ENCODE measurements at regions of chr16 and their contacts with region 1.

Region 1: DNA sequence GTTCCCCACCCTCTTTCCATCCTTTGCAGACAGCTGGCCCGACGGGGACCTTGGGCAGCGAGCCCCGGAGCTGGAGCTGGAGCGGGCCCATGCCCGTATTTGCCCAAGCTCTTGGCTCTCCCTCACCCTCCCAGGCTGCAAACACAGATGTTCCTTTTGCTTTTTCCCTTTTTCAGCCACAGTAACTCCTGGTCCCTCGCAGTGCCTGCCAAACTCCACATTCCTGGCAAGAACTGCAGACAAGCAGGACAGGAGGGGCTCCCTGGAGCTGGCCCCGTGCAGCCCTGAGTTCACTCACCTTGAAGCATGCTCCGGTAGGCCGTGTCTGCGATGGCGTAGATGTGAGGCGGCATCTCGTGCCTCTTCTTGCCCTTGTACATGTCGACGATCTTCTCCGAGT is 33.9 kb downstream of the MYH11 start:
- DNase-seq: no peak
- H3K4me3 Mint-ChIP-seq: no peak overlapping the region
- H3K27ac Mint-ChIP-seq: no peak overlapping the region
- H3K4me1 Mint-ChIP-seq: no peaks in the 10 kb centered on the region
- H3K27me3 Mint-ChIP-seq: peaks cover 4% of the 10 kb centered on the region

Region 2: DNA sequence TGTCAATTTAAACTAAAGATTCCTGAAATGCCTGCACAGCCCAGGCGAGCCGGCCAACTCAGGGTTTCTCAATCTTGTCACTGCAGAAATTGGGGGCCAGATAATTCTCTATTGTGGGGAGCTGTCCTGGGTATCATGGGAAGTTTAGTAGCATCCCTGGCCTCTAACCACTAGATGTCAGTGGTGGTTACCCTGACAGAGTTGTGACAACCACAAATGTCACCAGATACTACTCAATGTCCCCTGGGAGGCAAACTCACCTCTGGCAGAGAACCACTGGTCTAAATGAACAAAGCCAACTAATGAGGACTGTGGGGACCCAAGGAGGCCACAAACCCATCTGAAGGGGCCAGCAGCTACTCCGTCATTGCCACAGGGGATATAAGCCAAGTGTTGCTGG is 57.1 kb before region 1 on chr16:
- CTCF ChIA-PET with region 1: interaction called, 11 read pairs
- DNase-seq: peak; percentile 54
- H3K4me3 Mint-ChIP-seq: no peak overlapping the region
- H3K27ac Mint-ChIP-seq: no peak overlapping the region
- H3K4me1 Mint-ChIP-seq: no peaks in the 10 kb centered on the region
- H3K27me3 Mint-ChIP-seq: no peaks in the 10 kb centered on the region

Region 3: DNA sequence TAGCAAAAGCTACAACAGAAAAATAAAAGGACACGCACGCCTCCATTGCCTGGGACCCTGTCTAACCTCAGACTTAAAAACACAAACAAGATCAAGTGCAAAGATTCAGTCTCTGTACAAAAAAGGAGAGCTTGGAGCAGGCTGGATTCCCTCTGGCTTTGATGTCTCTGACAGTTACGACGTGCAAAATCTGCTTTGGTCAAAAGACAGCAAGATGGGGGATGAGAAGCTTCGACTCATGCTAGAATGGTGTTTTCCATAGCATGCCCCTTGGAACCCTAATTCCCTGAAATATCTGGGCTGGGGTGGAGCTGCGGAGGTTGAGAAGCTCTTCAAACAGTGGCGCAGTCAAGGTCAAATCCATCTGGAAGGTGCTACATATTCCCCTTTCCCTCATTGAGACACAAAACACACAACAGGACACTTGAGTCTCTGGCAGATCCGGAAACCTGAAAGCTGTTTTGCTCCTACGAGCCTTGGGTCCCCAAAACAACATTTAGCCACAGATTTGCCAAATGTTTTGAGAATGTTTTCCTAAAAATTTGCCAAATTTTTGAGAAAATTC is 24.7 kb after region 1 on chr16:
- CTCF ChIA-PET with region 1: interaction called, 10 read pairs
- DNase-seq: no peak
- H3K4me3 Mint-ChIP-seq: no peak overlapping the region
- H3K27ac Mint-ChIP-seq: no peak overlapping the region
- H3K4me1 Mint-ChIP-seq: no peaks in the 10 kb centered on the region
- H3K27me3 Mint-ChIP-seq: peaks cover 16% of the 10 kb centered on the region

Region 4: GRCh38 chr16:15961060-15961511 is 138.1 kb after region 1 on chr16:
- CTCF ChIA-PET with region 1: no interaction called
- DNase-seq: peak; percentile 85
- H3K4me3 Mint-ChIP-seq: peak overlapping the region; percentile 78
- H3K27ac Mint-ChIP-seq: peak overlapping the region; percentile 99
- H3K4me1 Mint-ChIP-seq: peaks cover 72% of the 10 kb centered on the region
- H3K27me3 Mint-ChIP-seq: no peaks in the 10 kb centered on the region

Measured in activated naive CD4-positive, alpha-beta T cell treated with anti-CD3 and anti-CD28 coated beads, Interleukin-2, amount 10 ng/mL, durations not matched to agents 7 days and 5 days (primary cell).